Cardiac septum (tissue), 1 donor: ENCODE measurements at regions of chr2 and their contacts with region 1.

Region 1: GRCh38 chr2:26959331-26959730 is 11.1 kb upstream of the MAPRE3 start:
- DNase-seq: no peak

Region 2: GRCh38 chr2:26704441-26704977 is 254.8 kb before region 1 on chr2:
- intact Hi-C with region 1: no loop called
- DNase-seq: no peak

Region 3: GRCh38 chr2:26864226-26864625 is 95.1 kb before region 1 on chr2:
- intact Hi-C with region 1: no loop called
- DNase-seq: no peak

Region 4: GRCh38 chr2:27016801-27017325 is 57.5 kb after region 1 on chr2:
- intact Hi-C with region 1: loop called (anchors 1 kb)
- DNase-seq: peak; percentile 14

Region 5: DNA sequence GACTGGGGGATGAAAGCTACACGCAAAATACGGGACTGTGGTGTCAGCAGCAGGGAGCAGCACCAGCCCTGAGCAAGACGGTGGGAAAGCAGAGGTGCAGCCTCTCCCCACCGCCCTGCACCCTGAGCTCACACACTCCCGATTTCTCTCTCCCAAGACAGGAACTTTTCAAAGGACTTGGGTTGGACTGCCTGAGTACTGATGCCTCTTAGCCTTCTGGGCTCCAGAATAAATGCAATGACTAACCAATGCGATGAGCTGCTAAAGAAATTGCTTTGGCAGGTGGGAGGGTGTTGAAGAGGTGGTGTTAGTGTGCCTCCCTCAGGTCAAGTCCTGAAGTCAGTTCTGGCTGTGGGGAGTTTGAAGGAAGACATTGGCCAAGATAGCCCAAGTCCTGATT is 332.5 kb after region 1 on chr2:
- intact Hi-C with region 1: no loop called
- DNase-seq: no peak